ENCODE measurements at regions of chr11 and their contacts with region 1.

Region 1: GRCh38 chr11:120235024-120235861 is 4.7 kb upstream of the POU2F3 start:
- H3K4me3 Mint-ChIP-seq: no peak overlapping the region
- H3K27ac Mint-ChIP-seq: no peak overlapping the region
- H3K4me1 Mint-ChIP-seq: peaks cover 9% of the 10 kb centered on the region
- H3K27me3 Mint-ChIP-seq: peaks cover 80% of the 10 kb centered on the region

Region 2: GRCh38 chr11:120303004-120303637 is 67.9 kb after region 1 on chr11:
- intact Hi-C with region 1: loop called (anchors 1 kb)
- H3K4me3 Mint-ChIP-seq: no peak overlapping the region
- H3K27ac Mint-ChIP-seq: no peak overlapping the region
- H3K4me1 Mint-ChIP-seq: peaks cover 10% of the 10 kb centered on the region
- H3K27me3 Mint-ChIP-seq: peaks cover 62% of the 10 kb centered on the region